Left ventricle myocardium superior (tissue), 1 donor: ENCODE measurements at regions of chr10 and their contacts with region 1.

Region 1: GRCh38 chr10:102917962-102918816 is at the start of gene CNNM2:
- DNase-seq: peak; percentile 100
- ATAC-seq: peak; percentile 97
- total RNA-seq, gene CNNM2: 4.2 TPM

Region 2: GRCh38 chr10:103069453-103070331 is 151.5 kb after region 1 on chr10:
- intact Hi-C with region 1: loop called (anchors 10 kb)
- DNase-seq: peak; percentile 71
- ATAC-seq: peak; percentile 86

Region 3: GRCh38 chr10:103244663-103245271 is 326.6 kb after region 1 on chr10:
- intact Hi-C with region 1: loop called (anchors 5 kb)
- DNase-seq: peak; percentile 52
- ATAC-seq: peak; percentile 90